ENCODE measurements at regions of chr5 and their contacts with region 1.

Region 1: GRCh38 chr5:179763215-179763945 is 30.4 kb upstream of the LTC4S start:
- DNase-seq: peak; percentile 73 to 78
- ATAC-seq: peak; percentile 86
- H3K4me3 ChIP-seq: no peak overlapping the region
- H3K27ac ChIP-seq: peak overlapping the region; percentile 46 to 95
- H3K4me1 ChIP-seq: peaks cover 0 to 3% of the 10 kb centered on the region in 2 donors
- H3K27me3 ChIP-seq: no peaks in the 10 kb centered on the region

Region 2: GRCh38 chr5:179732417-179732917 is 30.9 kb before region 1 on chr5 and contains the start of gene MAML1:
- intact Hi-C with region 1: loop called in 1 of 2 experiments (anchors 2 kb)
- DNase-seq: peak; percentile 100
- ATAC-seq: peak; percentile 100
- H3K4me3 ChIP-seq: peak within 1 kb of the TSS; percentile 81 to 85
- H3K27ac ChIP-seq: peak within 1 kb of the TSS; percentile 83 to 90
- H3K4me1 ChIP-seq: no peaks in the 10 kb centered on the region
- H3K27me3 ChIP-seq: no peaks in the 10 kb centered on the region
- total RNA-seq, gene MAML1: 26.1 to 35.3 TPM